Astrocyte of the cerebellum (primary cell): ENCODE measurements at regions of chr10 and their contacts with region 1.

Region 1: GRCh38 chr10:114470956-114471905 is 66.9 kb upstream of the AFAP1L2 start:
- DNase-seq: peak; percentile 53
- H3K4me3 ChIP-seq: no peak overlapping the region
- CTCF ChIP-seq: peak; percentile 87

Region 2: GRCh38 chr10:114403541-114404161 is 67.6 kb before region 1 on chr10:
- in situ Hi-C with region 1: no loop called
- DNase-seq: no peak
- H3K4me3 ChIP-seq: peak overlapping the region; percentile 53
- CTCF ChIP-seq: peak; percentile 46

Region 3: GRCh38 chr10:114432566-114433093 is 38.6 kb before region 1 on chr10:
- in situ Hi-C with region 1: loop called (anchors 5 kb)
- DNase-seq: no peak
- H3K4me3 ChIP-seq: no peak overlapping the region
- CTCF ChIP-seq: no peak

Region 4: DNA sequence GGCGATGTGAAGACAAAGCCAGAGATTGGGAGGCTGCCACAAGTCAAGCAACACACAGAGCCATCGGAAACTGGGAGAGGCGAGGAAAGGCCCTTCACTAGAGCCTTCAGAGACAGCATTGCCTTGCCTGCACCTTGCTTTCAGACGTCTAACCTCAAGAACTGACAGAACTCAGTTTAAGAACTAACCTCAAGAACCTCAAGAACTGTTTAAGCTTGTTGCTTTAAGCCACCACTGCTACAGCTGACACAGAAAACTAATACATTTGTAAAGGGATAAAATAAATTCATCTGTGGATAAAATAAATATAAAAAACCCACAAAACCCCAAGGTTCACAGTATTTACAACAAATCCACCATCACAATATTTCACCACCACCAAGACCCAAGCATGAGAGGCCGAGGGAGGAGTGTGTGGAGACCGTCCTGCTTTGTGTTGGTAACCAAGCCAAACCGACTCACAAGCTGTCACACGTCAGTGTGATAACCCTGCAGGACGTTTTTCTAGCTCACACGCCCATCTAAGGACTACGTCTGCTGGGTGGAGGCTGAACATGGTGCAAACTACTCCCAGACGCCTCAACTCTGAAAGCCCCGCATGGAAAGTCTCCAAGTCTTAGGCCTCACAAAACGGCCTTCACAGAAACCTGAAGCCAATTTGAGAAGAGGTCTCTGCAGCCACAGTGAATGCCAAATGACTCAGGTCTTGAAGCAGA is 70.0 kb after region 1 on chr10:
- in situ Hi-C with region 1: loop called (anchors 5 kb)
- DNase-seq: peak; percentile 76
- H3K4me3 ChIP-seq: no peak overlapping the region
- CTCF ChIP-seq: no peak